Activated T-helper 2 cell treated with anti-CD3 and anti-CD28 coated beads, Interferon-gamma antibody, Interleukin-2, Interleukin-4, amounts not matched to agents 10 μg/mL and 5 μg/mL and 100 μg/mL, durations not matched to agents 14 hours and 24 hours and 36 hours (primary cell): ENCODE measurements at regions of chr14 and their contacts with region 1.

Region 1: GRCh38 chr14:22929104-22929847 is at the start of gene PRMT5:
- DNase-seq: peak; percentile 96
- H3K4me3 Mint-ChIP-seq: no peak within 1 kb of the TSS
- H3K27ac Mint-ChIP-seq: no peak within 1 kb of the TSS
- H3K4me1 Mint-ChIP-seq: peaks cover 27% of the 10 kb centered on the region
- H3K27me3 Mint-ChIP-seq: no peaks in the 10 kb centered on the region
- total RNA-seq, gene PRMT5: 147 and 152 TPM in 2 replicates

Region 2: GRCh38 chr14:22882529-22883172 is 46.6 kb before region 1 on chr14:
- intact Hi-C with region 1: no loop called
- DNase-seq: no peak
- H3K4me3 Mint-ChIP-seq: no peak overlapping the region
- H3K27ac Mint-ChIP-seq: no peak overlapping the region
- H3K4me1 Mint-ChIP-seq: peaks cover 15% of the 10 kb centered on the region
- H3K27me3 Mint-ChIP-seq: peaks cover 11% of the 10 kb centered on the region

Region 3: DNA sequence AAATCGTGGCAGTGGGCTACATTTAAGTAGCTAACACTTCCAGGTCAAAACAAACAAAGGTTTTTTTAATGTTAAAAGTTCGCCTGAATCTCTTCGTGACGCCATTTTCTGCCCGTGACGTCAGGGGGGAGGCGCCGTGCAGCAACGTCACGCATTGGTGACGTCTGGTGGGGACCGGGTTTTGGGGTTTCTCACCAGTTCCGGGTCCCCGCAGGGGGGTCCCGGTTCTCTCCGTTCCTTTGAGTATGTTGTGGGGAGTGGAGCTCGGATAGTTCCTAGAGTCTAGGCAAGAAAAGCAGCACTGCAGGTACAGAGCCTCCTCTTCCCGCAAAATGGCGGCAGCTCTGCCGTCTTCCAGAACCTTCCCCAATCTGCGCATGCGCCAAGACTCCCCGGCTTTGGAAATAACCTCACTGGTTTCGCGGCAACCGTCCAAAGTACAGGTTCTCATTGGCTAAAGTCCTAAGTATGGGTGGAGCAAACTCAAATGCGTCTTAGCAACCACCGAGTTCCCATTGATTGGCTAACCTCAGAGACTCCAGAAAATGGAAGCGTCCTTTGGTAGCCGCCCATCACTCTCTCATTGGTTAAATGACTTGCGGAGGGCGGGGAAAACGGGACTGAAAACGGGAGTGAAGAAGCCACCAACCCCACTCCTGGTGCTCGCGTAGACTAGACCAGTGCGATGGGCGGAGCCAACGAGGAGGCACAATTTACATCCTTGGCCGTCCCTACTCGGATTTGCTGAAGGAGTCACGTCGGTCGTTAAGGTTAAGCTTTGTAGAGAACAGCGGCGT is 10.3 kb before region 1 on chr14 and contains the start of gene RBM23:
- intact Hi-C with region 1: loop called (anchors 1 kb)
- DNase-seq: peak; percentile 99
- H3K4me3 Mint-ChIP-seq: peak within 1 kb of the TSS; percentile 94
- H3K27ac Mint-ChIP-seq: peak within 1 kb of the TSS; percentile 100
- H3K4me1 Mint-ChIP-seq: peaks cover 29% of the 10 kb centered on the region
- H3K27me3 Mint-ChIP-seq: no peaks in the 10 kb centered on the region
- total RNA-seq, gene RBM23: 77.3 and 81.1 TPM in 2 replicates

Region 4: DNA sequence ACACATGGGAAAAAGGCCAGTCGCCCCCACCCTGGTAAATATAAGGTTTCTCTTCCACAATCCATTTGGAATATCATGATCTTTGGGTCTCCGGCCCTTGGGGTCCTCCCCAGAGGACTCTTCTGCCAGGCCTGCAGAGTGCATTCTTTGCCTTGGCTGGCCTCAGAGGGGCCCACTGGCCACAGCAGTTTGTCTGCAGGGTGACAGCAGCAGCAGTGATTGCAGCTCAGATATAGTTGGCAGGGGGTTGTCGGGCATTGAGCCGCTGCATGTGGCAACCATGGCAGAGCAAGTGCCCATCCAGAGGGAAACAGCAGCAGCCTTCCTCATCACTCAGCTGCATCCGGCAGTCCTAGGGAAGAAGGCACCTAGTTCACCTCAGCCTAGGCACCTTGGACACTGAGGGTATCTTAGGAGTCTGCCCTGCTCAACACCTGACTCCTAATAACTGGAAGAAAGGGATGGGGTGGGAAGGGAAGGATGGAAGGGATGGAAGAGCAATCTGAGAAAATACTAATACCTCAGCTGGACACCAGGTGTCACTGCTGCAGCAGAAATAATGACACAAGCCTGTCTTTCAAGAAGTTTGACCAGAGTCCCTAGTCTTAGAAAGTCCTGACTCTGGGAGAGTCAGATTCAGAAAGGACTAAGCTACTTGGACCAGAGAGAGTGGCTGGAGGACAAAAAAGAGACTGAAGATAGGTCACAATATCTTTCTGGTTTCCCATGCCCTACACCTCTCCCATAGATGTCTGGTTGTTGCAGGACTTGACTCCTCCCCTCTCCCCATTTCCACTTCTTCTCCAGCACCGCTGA is 44.1 kb after region 1 on chr14:
- intact Hi-C with region 1: no loop called
- DNase-seq: no peak
- H3K4me3 Mint-ChIP-seq: no peak overlapping the region
- H3K27ac Mint-ChIP-seq: no peak overlapping the region
- H3K4me1 Mint-ChIP-seq: no peaks in the 10 kb centered on the region
- H3K27me3 Mint-ChIP-seq: peaks cover 22% of the 10 kb centered on the region

Region 5: GRCh38 chr14:22986508-22987054 is 57.3 kb after region 1 on chr14:
- intact Hi-C with region 1: loop called (anchors 1 kb)
- DNase-seq: peak; percentile 78
- H3K4me3 Mint-ChIP-seq: no peak overlapping the region
- H3K27ac Mint-ChIP-seq: no peak overlapping the region
- H3K4me1 Mint-ChIP-seq: no peaks in the 10 kb centered on the region
- H3K27me3 Mint-ChIP-seq: no peaks in the 10 kb centered on the region

Region 6: GRCh38 chr14:23057757-23058653 is 128.7 kb after region 1 on chr14:
- intact Hi-C with region 1: loop called (anchors 1 kb)
- DNase-seq: peak; percentile 79
- H3K4me3 Mint-ChIP-seq: peak overlapping the region; percentile 84
- H3K27ac Mint-ChIP-seq: peak overlapping the region; percentile 51
- H3K4me1 Mint-ChIP-seq: peaks cover 16% of the 10 kb centered on the region
- H3K27me3 Mint-ChIP-seq: peaks cover 7% of the 10 kb centered on the region